Colonic mucosa (tissue), 4 donors: ENCODE measurements at regions of chr5 and their contacts with region 1.

Region 1: DNA sequence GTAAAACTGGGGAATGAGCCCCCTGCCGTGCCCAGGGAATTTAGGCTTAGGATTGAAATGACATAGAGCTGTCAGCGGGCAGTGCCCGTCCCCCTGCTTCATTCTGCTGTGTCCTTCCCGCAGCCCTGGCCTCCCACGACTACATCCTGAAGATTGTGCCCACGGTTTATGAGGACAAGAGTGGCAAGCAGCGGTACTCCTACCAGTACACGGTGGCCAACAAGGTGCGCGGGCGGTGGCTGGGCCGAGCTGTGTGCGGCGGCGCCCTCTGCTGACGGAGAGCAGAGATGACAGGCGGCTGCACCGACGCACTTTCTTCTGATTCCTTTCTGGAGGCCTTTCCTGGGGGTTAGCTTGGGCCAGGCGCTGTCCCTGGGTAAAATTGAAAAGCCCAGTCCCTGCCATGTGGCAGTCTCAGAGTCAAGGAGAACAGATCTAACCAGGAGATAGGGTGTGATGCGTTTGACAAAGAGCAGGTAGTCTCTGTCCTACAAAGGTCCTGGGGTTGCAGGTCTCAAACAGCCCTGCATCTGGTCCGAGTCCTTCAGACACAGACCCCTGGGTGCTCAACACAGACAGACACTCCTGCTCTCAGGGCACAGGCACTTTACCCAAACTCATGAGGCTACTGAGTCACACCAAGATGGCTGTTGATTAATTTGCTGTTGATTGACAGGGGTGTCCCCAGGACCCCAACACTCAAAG is 26.8 kb upstream of the RPL26L1 start:
- DNase-seq: peak; percentile 63
- H3K4me3 ChIP-seq: no peak overlapping the region
- H3K27ac ChIP-seq: no peak overlapping the region
- H3K4me1 ChIP-seq: no peaks in the 10 kb centered on the region
- H3K27me3 ChIP-seq: no peaks in the 10 kb centered on the region
- CTCF ChIP-seq: peak; percentile 93

Region 2: GRCh38 chr5:172463031-172463430 is 469.4 kb before region 1 on chr5:
- intact Hi-C with region 1: loop called (anchors 10 kb)
- DNase-seq: no peak
- H3K4me3 ChIP-seq: no peak overlapping the region
- H3K27ac ChIP-seq: no peak overlapping the region
- H3K4me1 ChIP-seq: no peaks in the 10 kb centered on the region
- H3K27me3 ChIP-seq: no peaks in the 10 kb centered on the region
- CTCF ChIP-seq: no peak

Region 3: GRCh38 chr5:172705576-172706084 is 226.8 kb before region 1 on chr5:
- intact Hi-C with region 1: no loop called
- DNase-seq: no peak
- H3K4me3 ChIP-seq: no peak overlapping the region
- H3K27ac ChIP-seq: no peak overlapping the region
- H3K4me1 ChIP-seq: no peaks in the 10 kb centered on the region
- H3K27me3 ChIP-seq: no peaks in the 10 kb centered on the region
- CTCF ChIP-seq: no peak

Region 4: DNA sequence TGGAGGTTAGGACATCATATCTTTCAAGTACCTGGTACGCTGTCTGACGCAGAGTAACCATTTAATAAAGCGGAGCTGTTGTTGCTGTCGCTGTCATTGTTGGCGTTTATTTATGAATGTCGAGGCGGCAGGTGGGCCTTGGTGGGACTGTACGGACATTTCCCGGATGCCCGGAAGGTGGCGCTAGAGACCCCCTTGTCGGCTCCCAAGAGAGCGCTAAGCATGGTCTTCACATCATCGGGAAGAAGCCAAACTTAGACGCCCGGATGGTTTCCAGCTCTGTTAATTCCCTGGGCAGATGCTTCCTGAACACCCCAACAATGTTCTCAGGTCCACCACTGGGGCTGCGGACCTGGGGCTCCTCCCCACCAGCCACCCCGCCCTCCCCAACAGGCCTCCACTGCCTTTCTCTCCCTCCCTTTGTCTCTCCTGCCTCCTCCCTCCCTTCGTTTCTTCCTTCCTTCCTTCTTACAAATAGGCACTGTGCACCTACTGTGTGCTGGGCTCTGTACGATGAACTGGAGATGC is 215.6 kb before region 1 on chr5:
- intact Hi-C with region 1: loop called (anchors 2 kb)
- DNase-seq: peak; percentile 84
- H3K4me3 ChIP-seq: no peak overlapping the region
- H3K27ac ChIP-seq: no peak overlapping the region
- H3K4me1 ChIP-seq: no peaks in the 10 kb centered on the region
- H3K27me3 ChIP-seq: no peaks in the 10 kb centered on the region
- CTCF ChIP-seq: peak; percentile 86

Region 5: GRCh38 chr5:172881691-172882370 is 50.6 kb before region 1 on chr5:
- intact Hi-C with region 1: no loop called
- DNase-seq: no peak
- H3K4me3 ChIP-seq: no peak overlapping the region
- H3K27ac ChIP-seq: no peak overlapping the region
- H3K4me1 ChIP-seq: no peaks in the 10 kb centered on the region
- H3K27me3 ChIP-seq: no peaks in the 10 kb centered on the region
- CTCF ChIP-seq: no peak